IMR-90 (cell line): ENCODE measurements at regions of chr12 and their contacts with region 1.

Region 1: DNA sequence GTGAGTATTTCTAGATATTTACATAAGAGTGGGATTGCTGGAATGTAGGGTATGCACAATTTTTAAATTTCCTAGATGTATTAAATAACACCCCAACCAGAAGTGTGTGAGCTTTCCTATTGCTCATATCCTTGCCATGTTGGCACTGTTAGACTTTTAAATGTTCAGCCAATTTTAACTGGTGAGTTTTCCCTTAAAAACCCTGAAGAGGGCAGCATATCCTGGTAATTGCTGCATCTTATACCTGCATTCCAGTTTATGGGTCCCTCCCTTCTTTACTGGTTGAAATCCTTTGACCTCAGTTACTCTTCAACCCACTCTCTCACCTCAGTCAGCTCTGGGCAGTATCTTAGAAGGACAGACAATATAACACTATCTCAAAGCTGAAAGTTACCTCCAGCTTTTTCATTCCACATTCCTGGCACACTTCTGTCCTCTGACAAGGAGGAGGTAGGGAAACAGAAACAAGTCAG is 270.6 kb downstream of the PAWR start:
- DNase-seq: peak; percentile 95
- ATAC-seq: peak; percentile 66
- H3K4me3 ChIP-seq: no peak overlapping the region
- H3K27ac ChIP-seq: peak overlapping the region; percentile 72
- H3K4me1 ChIP-seq: peaks cover 24% of the 10 kb centered on the region
- H3K27me3 ChIP-seq: no peaks in the 10 kb centered on the region
- CTCF ChIP-seq: peak; percentile 79
- POLR2A ChIP-seq: no peak
- RAD21 ChIP-seq: peak; percentile 80

Region 2: DNA sequence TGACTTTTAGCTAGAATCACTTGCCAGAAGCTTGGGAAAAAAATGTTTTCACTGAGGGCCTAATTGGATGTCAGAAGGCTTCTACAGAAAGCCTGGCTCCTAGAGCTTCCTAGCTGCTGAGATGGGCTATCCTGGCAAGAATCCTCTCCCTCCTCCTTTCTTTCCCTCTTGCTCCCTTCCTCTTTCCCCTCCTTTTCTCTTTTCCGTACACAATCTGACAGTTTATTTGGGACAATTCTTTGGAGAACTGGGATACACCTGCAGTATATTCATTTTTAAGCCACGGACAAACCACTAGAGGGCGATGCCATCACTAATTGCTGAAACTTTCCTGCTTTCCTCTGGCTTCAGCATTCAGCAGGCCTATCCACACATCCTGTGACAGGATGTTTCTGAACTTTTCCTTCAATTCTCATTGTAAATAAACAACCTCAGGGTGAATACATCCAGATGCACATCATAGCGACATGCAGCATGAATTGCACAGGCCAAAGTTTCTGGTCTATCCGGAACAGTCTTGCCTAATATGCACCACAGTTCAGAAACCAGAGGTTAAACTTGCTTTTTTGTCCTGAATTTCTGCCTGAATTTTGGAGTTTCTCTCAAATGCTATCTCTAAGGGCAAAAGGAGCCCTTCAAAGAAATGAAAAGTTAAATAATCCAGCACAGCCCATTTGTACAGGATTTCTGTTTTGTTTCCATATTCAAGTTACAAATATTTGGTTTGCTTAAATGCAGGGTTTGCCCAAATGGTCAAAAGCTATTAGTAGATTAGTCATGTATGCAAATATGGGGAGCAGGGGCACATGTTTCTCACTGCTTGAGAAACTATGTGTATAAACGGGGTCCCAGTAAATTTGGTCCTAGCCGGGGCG is 127.8 kb after region 1 on chr12:
- CTCF ChIA-PET with region 1: interaction called, 6 read pairs
- POLR2A ChIA-PET with region 1: no interaction called
- dilution Hi-C with region 1: no loop called
- in situ Hi-C with region 1: no loop called
- intact Hi-C with region 1: loop called (anchors 1 kb)
- DNase-seq: peak; percentile 83
- ATAC-seq: peak; percentile 68
- H3K4me3 ChIP-seq: no peak overlapping the region
- H3K27ac ChIP-seq: peak overlapping the region; percentile 67
- H3K4me1 ChIP-seq: peaks cover 19% of the 10 kb centered on the region
- H3K27me3 ChIP-seq: no peaks in the 10 kb centered on the region
- CTCF ChIP-seq: peak; percentile 68
- POLR2A ChIP-seq: no peak
- RAD21 ChIP-seq: peak; percentile 62

Region 3: DNA sequence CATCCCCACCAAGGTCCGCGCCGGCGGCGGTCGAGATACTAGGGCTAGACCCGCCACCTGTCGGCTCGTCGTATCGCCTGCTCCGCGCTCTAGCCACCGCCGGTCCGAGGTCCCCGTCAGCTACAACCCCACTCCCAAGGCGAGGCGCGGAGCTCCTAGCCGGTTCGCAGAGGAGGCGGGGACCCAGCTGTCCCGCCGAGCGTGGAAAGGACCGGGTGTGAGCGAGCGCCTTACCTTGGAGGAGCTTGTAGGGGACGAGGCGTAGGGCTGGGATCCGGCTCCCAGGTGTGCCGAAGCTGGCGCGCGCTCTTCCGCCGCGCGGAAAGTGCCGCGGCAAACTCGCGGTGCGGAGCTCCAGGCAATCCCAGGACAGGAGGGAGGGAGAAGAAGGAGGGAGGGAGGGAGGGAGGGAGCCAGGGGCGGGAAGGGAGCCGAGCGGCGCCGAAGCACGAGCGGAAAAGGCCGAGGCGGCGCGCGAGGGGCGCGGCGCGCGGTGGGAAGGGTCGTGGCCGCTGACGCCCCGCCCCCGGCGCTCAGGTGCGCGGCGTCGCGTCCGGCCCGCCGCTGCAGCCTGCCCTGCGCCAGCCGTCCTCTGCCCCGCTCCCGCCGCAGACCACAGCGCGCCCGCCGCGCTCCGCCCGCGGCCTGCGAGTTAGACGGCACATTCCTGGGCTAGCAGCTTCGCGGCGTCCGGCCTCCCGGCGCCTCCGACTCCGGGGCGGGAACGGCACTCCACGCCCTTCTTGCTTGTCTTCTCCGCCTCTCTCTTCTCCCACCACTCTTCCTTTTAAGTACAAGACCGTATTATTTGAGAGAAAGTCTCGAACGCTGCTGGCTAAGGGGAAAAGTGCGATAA is 270.7 kb after region 1 on chr12 and contains the start of gene PAWR:
- CTCF ChIA-PET with region 1: no interaction called
- POLR2A ChIA-PET with region 1: no interaction called
- dilution Hi-C with region 1: no loop called
- in situ Hi-C with region 1: loop called (anchors 5 kb)
- intact Hi-C with region 1: loop called (anchors 1 kb)
- DNase-seq: peak; percentile 93
- ATAC-seq: peak; percentile 60
- H3K4me3 ChIP-seq: peak within 1 kb of the TSS; percentile 96
- H3K27ac ChIP-seq: peak within 1 kb of the TSS; percentile 79
- H3K4me1 ChIP-seq: peaks cover 12% of the 10 kb centered on the region; the same call in 1 of the 2 replicates
- H3K27me3 ChIP-seq: no peaks in the 10 kb centered on the region
- CTCF ChIP-seq: peak; percentile 30
- POLR2A ChIP-seq: peak; percentile 80
- RAD21 ChIP-seq: no peak
- total RNA-seq, gene PAWR: 13.6 and 34.4 TPM in 2 replicates

Region 4: GRCh38 chr12:79737875-79738718 is 317.9 kb after region 1 on chr12:
- CTCF ChIA-PET with region 1: interaction called, 3 read pairs
- POLR2A ChIA-PET with region 1: no interaction called
- dilution Hi-C with region 1: no loop called
- in situ Hi-C with region 1: no loop called
- intact Hi-C with region 1: loop called (anchors 1 kb)
- DNase-seq: peak; percentile 70
- ATAC-seq: peak; percentile 63
- H3K4me3 ChIP-seq: no peak overlapping the region
- H3K27ac ChIP-seq: no peak overlapping the region
- H3K4me1 ChIP-seq: no peaks in the 10 kb centered on the region
- H3K27me3 ChIP-seq: no peaks in the 10 kb centered on the region
- CTCF ChIP-seq: peak; percentile 70
- POLR2A ChIP-seq: no peak
- RAD21 ChIP-seq: peak; percentile 72

Region 5: DNA sequence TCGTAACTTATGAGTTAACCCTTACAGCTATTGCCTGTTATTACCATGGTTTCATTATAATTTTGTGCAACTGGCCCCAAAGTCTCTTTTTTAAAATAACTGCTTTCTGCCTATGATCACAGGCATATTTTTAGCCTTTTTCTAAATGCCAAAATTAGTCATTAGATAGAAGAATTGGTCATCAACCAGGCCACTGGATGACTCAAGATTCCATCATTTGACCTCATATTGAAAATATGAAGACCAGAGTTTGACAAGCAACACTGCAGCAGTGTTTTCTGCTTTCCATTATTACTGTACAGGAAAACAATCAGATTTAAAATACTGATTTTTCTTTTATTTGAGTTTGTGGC is 624.5 kb after region 1 on chr12:
- CTCF ChIA-PET with region 1: no interaction called
- POLR2A ChIA-PET with region 1: no interaction called
- dilution Hi-C with region 1: no loop called
- in situ Hi-C with region 1: no loop called
- intact Hi-C with region 1: loop called (anchors 10 kb)
- DNase-seq: peak; percentile 94
- ATAC-seq: peak; percentile 65
- H3K4me3 ChIP-seq: no peak overlapping the region
- H3K27ac ChIP-seq: no peak overlapping the region; the same call in 1 of the 2 replicates
- H3K4me1 ChIP-seq: peaks cover 4% of the 10 kb centered on the region; the same call in 1 of the 2 replicates
- H3K27me3 ChIP-seq: no peaks in the 10 kb centered on the region
- CTCF ChIP-seq: no peak
- POLR2A ChIP-seq: no peak
- RAD21 ChIP-seq: no peak

Region 6: DNA sequence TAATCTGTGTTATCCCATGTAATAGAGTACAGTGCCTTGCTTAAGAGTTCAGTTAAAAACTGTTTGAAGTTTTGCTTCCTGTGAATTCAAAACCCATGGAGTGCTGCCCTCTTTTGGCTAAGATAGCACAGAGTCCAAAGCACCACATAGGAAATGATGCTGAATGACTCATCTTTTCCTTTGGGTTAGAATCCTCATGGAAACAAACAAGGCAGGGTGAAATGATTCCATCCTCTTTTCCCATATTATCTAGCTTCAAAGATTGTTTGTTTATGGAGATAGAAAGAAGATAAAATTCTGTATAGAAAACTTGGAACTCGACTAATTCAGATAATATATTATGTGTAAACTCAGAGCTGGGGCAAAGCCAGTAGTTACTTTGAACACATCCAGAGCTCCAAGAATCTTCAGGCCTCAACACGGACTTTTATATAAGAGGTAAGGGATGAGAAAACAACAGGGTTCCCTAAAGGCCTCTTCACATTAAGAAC is 766.6 kb after region 1 on chr12:
- CTCF ChIA-PET with region 1: interaction called, 3 read pairs
- POLR2A ChIA-PET with region 1: no interaction called
- dilution Hi-C with region 1: no loop called
- in situ Hi-C with region 1: no loop called
- intact Hi-C with region 1: loop called (anchors 1 kb)
- DNase-seq: peak; percentile 97
- ATAC-seq: peak; percentile 86
- H3K4me3 ChIP-seq: no peak overlapping the region
- H3K27ac ChIP-seq: peak overlapping the region; percentile 77
- H3K4me1 ChIP-seq: peaks cover 17% of the 10 kb centered on the region
- H3K27me3 ChIP-seq: no peaks in the 10 kb centered on the region
- CTCF ChIP-seq: peak; percentile 93
- POLR2A ChIP-seq: peak; percentile 55; the same call in 1 of the 2 replicates
- RAD21 ChIP-seq: peak; percentile 92

Region 7: DNA sequence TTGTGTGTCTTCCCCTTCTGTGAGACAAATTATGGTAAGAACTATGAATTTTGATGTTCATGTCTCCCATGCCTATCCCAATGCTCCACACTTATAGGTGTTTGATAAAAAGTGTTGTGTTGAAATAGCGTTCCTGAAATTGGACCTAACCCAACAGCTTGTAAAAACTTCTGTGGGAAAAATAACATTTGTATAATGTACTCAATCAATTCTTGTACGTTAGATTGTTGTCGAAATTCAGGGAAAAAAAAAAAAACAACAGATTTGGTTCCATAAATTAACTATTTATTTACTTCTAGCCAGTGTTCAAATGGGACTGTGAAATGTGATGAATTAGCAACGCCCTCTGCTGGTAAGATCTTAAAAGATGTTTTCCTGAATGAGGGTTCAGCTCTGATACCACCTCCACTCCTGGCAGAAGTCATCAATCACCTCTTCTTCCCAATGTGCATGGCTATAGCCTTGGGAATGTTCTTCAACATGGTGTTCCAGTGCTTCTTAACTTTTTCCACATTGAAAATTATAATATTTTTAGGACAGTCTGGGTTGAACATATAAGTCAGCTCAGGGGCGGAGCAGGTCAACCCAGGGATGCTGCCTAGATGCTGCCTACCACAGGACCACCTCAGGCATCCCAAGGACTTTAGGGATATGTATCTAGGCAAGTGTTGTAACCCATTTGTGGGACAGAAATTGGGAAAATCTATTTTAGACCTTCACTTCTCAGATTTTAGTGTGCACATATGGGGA is 849.8 kb after region 1 on chr12:
- CTCF ChIA-PET with region 1: no interaction called
- POLR2A ChIA-PET with region 1: no interaction called
- dilution Hi-C with region 1: no loop called
- in situ Hi-C with region 1: no loop called
- intact Hi-C with region 1: loop called (anchors 5 kb)
- DNase-seq: peak; percentile 60
- ATAC-seq: peak; percentile 64
- H3K4me3 ChIP-seq: no peak overlapping the region
- H3K27ac ChIP-seq: no peak overlapping the region
- H3K4me1 ChIP-seq: peaks cover 4% of the 10 kb centered on the region
- H3K27me3 ChIP-seq: no peaks in the 10 kb centered on the region
- CTCF ChIP-seq: peak; percentile 70
- POLR2A ChIP-seq: no peak
- RAD21 ChIP-seq: peak; percentile 66

Region 8: GRCh38 chr12:80485222-80485987 is 1065.2 kb after region 1 on chr12:
- CTCF ChIA-PET with region 1: no interaction called
- POLR2A ChIA-PET with region 1: no interaction called
- dilution Hi-C with region 1: no loop called
- in situ Hi-C with region 1: no loop called
- intact Hi-C with region 1: no loop called
- DNase-seq: no peak
- ATAC-seq: no peak
- H3K4me3 ChIP-seq: no peak overlapping the region
- H3K27ac ChIP-seq: no peak overlapping the region
- H3K4me1 ChIP-seq: peaks cover 2% of the 10 kb centered on the region; the same call in 1 of the 2 replicates
- H3K27me3 ChIP-seq: no peaks in the 10 kb centered on the region
- CTCF ChIP-seq: no peak
- POLR2A ChIP-seq: no peak
- RAD21 ChIP-seq: no peak